Heart left ventricle (tissue), 16 donors: ENCODE measurements at regions of chr22 and their contacts with region 1.

Region 1: DNA sequence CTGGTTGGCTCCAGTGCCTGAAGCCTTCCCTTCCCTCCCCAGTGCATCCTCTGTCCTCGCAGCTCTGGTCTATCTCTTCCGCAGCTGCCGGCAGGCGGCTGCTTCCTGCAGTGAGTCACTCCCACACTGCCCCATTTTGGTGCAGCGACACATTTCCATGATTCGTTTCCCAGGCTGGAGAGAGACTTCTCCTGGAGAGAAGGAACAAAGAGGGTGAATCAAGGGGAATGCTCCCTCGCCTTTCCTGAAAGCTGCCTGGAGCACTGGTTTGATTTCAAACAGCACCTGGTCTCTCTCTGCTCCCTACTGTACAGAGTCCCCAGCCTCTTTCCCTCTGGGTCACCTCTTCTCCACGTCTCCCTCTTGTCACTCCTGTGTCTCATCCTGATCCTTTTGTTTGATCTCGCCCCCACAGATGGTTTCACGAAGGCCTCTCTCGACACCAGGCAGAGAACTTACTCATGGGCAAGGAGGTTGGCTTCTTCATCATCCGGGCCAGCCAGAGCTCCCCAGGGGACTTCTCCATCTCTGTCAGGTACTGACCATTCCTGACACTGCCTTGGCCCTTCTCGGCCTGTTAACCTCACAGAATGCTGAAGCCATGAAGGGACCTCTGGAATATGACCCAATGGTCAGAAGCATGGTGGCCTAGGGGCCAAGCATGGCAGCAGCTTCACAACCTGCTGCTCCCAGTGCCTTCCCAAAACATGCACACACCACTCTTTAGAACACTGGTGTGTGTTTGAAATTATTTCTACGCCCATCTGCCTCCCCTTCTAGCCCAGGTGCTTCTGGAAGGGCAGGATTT is at the start of gene TMA7B:
- DNase-seq: peak in 1 of 5 donors; percentile 38
- ATAC-seq: peak in 3 of 4 donors; percentile 56 to 69 (median 58)
- H3K4me3 ChIP-seq: no peak within 1 kb of the TSS
- H3K27ac ChIP-seq: peak within 1 kb of the TSS in 1 of 12 donors; percentile 46
- H3K4me1 ChIP-seq: peaks cover 0 to 44% (median 0%) of the 10 kb centered on the region in 12 donors
- H3K27me3 ChIP-seq: peaks cover 0 to 13% (median 0%) of the 10 kb centered on the region in 9 donors
- CTCF ChIP-seq: peak in 8 of 12 donors; percentile 6 to 30 (median 18)
- POLR2A ChIP-seq: no peak
- total RNA-seq, gene TMA7B: 0.24 TPM in 1 of 9 donors, not detected in the others

Region 2: DNA sequence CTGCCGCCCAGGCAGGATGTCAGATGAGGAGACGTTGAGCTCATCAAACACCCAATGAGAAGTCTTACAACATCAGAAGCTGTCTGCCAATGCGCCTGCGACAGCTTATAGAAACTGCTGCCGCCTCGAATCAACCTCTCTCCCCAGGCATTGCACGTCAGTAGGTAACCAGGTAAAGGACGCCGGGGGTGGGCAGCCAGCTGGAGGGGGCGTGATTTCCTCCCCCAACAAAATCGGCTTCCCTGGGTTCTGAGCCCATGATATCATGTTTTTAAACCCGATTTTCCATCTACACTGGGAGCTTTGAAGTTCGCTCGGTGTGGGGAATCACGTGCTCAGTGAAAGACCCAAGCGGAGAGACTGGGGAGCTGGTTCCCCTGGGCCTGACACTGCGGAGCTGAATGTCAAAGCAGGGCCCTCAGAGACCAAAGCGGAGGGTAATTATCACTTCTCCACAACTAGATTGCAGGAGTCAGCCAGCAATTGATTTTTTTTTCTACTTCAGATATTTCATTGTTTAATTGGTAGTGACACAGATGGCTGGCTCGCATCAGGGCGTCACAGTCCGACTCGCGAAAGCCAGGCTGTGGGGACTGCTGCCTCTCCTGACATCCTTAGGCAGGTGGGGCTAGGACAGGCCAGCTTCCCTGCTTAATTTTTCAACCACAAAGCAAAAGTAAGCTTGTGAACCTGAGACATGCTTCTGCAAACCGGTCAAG is 50.3 kb after region 1 on chr22:
- intact Hi-C with region 1: loop called in 1 of 10 experiments (anchors 10 kb)
- DNase-seq: no peak
- ATAC-seq: no peak
- H3K4me3 ChIP-seq: no peak overlapping the region
- H3K27ac ChIP-seq: no peak overlapping the region
- H3K4me1 ChIP-seq: peaks cover 0 to 10% (median 0%) of the 10 kb centered on the region in 12 donors
- H3K27me3 ChIP-seq: peaks cover 0 to 44% (median 13%) of the 10 kb centered on the region in 9 donors
- CTCF ChIP-seq: no peak
- POLR2A ChIP-seq: no peak

Region 3: GRCh38 chr22:40258451-40259046 is 298.7 kb after region 1 on chr22:
- intact Hi-C with region 1: no loop called
- DNase-seq: no peak
- ATAC-seq: peak; percentile 53 to 75 (median 70)
- H3K4me3 ChIP-seq: no peak overlapping the region
- H3K27ac ChIP-seq: peak overlapping the region in 6 of 12 donors; percentile 3 to 82 (median 64)
- H3K4me1 ChIP-seq: peaks cover 0 to 48% (median 19%) of the 10 kb centered on the region in 12 donors
- H3K27me3 ChIP-seq: no peaks in the 10 kb centered on the region
- CTCF ChIP-seq: no peak
- POLR2A ChIP-seq: no peak

Region 4: DNA sequence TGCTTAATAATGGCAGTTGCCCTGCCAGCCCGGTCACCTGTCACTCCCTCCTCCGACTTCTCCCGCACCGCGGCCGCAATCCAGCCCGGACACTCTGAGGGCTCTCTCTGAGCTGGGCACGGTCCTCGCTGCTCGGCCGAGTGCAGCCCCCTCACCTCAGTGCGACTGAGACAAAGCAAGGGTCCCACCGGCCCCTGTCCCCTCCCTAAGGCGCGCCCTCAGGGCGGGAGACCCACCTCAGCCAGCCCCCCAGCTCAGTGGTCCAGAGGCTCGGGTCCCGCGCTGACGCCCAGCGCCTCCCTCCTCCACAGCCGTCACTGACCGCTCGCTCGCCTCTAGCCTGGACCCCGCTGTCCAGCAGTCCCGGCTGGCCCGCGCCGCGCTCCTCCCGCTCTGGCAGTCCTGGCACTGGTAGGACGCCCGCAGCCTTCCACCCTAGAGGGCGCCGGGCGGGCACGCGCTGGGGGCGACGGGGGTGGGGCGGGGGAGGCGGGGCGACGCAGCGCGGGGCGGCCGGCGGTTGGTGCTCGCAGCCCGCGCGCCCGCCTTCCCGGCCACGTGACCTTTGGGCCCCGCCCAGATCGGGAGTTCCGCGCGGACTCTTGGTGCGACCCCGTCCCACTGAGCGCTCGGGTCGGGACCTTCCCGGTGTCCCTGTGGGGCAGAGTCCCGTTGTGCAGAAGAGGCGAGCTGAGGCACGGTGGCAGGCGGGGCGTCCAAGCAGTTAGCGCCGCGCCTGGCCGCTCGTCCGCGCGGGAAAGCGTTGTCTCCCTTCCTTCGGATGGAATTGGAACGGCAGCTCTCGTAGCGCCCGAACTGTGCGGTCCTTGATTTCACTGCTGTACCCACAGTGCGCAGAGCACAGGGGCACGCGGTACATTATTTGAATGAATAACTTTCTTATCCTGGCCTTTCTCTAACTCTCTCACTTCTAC is 1237.5 kb after region 1 on chr22:
- intact Hi-C with region 1: no loop called
- DNase-seq: peak; percentile 84 to 93 (median 88)
- ATAC-seq: peak; percentile 88 to 97 (median 96)
- H3K4me3 ChIP-seq: peak overlapping the region; percentile 39 to 91 (median 76)
- H3K27ac ChIP-seq: peak overlapping the region in 10 of 12 donors; percentile 0 to 74 (median 56)
- H3K4me1 ChIP-seq: peaks cover 0 to 20% (median 12%) of the 10 kb centered on the region in 12 donors
- H3K27me3 ChIP-seq: no peaks in the 10 kb centered on the region
- CTCF ChIP-seq: peak in 3 of 12 donors; percentile 17 to 33 (median 18)
- POLR2A ChIP-seq: peak in 1 of 2 donors; percentile 43